ENCODE measurements at regions of chr5 and their contacts with region 1.

Region 1: DNA sequence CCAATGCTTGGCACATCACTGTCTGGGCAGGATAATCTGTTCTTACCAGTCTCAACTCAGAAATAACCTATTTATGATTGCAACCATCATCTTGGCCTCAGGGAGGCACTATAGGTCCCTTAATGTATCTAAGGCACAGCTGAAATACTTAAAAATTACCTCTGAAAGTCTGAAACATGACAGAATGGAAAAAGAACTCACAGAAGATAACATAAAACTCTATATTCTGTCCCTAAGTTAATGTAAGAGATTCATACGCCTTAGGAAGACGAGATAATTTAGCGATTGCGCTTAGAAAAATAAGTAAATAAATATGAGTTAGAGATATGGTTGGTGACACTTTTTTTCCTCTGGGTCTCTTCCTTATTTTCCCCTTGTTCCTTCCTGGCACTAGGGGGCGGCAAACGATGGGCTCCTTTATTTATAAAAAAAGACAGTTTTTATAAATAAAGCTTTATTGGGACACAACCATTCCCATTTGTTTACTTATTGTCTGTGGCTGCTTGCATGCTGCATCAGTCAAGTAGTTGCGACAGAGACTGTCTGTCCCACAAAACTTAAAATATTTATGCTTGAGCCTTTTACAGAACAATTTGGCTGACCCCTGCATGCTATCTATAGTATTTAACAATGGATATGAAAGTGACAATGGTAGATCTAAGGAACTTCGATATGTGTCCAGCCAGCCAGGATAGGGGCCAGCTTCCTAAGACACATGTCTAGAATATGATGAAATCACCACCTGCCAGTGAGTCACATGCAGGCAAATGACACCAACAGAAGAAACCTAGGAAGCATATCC is 79.6 kb downstream of the PDE4D start:
- DNase-seq: peak; percentile 61
- H3K4me3 ChIP-seq: no peak overlapping the region
- H3K27ac ChIP-seq: no peak overlapping the region
- H3K4me1 ChIP-seq: no peaks in the 10 kb centered on the region
- CTCF ChIP-seq: peak; percentile 84

Region 2: DNA sequence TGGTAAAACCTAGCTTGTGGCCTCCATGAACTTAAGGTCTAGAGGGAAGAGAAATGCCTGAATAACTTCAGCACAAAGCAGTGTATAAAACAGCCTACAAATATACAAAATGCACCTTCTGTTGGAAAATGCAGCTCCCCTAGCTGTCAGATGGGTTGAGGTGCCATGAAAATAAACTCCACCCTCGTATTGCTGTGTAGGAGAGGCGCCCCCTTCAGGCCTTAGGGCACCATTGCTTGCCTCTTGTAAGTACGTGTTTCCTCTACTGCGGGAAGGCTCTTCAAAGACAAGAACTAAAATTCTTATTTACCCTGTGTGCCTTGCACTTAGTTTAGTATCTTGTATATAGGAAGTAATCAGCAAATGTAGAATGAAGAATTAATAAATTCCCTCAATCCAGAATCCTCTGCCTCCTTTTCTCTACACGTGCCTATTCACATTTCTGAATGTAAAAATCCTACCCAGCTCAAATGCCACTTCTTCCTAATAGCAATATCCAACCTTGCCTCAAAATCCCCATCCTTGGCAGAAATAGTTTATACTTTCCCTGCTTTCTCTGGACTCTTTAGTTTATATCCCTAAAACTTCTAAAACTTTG is 473.3 kb after region 1 on chr5:
- CTCF ChIA-PET with region 1: no interaction called
- POLR2A ChIA-PET with region 1: no interaction called
- intact Hi-C with region 1: loop called (anchors 1 kb)
- DNase-seq: peak; percentile 75
- H3K4me3 ChIP-seq: no peak overlapping the region
- H3K27ac ChIP-seq: no peak overlapping the region
- H3K4me1 ChIP-seq: no peaks in the 10 kb centered on the region
- CTCF ChIP-seq: peak; percentile 92

Measured in OCI-LY7 (cell line).